Ascending aorta (tissue), 2 donors: ENCODE measurements at regions of chr10 and their contacts with region 1.

Region 1: DNA sequence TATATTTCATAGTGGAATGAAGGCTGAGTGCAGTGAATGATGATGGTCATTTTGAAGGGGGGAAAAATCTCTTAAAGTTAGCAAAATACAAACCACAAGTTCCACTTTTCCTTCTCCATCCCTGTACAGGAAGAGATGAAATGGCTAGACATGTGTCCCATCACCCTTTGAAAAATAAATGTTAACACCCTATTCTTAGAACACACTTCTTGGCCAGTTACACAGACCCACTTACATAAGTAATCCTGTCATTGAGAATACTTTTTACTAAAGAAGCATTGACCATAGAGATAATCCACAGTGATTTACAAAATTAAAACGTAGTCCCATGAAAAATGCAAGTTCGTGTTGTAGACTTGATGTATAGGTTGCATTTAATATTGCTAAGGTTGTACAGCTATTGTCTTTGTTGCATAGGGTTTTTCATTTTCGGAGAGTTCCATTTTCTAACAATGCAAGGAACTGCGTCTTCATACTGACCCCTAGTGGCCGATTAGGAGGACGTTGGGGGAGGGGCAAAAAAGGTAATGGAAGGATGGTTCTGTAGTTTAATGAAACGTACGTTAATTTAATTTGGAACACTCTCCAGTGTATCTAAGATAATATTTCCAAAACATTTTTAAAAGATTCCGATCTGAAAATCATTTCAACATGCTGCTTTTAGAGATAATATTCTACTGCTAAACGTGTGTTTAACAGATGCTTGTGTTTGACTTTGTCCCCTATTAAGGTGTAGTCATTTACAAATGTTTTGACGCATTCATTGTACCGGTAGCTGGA is 60.9 kb downstream of the ARMC3 start:
- DNase-seq: peak in 1 of 2 donors; percentile 79
- H3K4me3 ChIP-seq: no peak overlapping the region
- H3K27ac ChIP-seq: no peak overlapping the region
- H3K4me1 ChIP-seq: peaks cover 0 to 3% of the 10 kb centered on the region in 2 donors
- H3K27me3 ChIP-seq: no peaks in the 10 kb centered on the region
- CTCF ChIP-seq: peak; percentile 86

Region 2: GRCh38 chr10:22010973-22011408 is 977.8 kb before region 1 on chr10:
- intact Hi-C with region 1: loop called (anchors 2 kb)
- DNase-seq: no peak
- H3K4me3 ChIP-seq: no peak overlapping the region
- H3K27ac ChIP-seq: no peak overlapping the region
- H3K4me1 ChIP-seq: no peaks in the 10 kb centered on the region
- H3K27me3 ChIP-seq: no peaks in the 10 kb centered on the region
- CTCF ChIP-seq: peak in 1 of 3 experiments; percentile 36

Region 3: GRCh38 chr10:22251751-22252223 is 737.0 kb before region 1 on chr10:
- intact Hi-C with region 1: loop called (anchors 5 kb)
- DNase-seq: peak in 1 of 2 donors; percentile 81
- H3K4me3 ChIP-seq: peak overlapping the region; percentile 81 to 93
- H3K27ac ChIP-seq: peak overlapping the region; percentile 98
- H3K4me1 ChIP-seq: no peaks in the 10 kb centered on the region
- H3K27me3 ChIP-seq: no peaks in the 10 kb centered on the region
- CTCF ChIP-seq: no peak

Region 4: GRCh38 chr10:22436884-22437619 is 551.7 kb before region 1 on chr10:
- intact Hi-C with region 1: loop called (anchors 5 kb)
- DNase-seq: peak; percentile 43 to 94
- H3K4me3 ChIP-seq: peak overlapping the region; percentile 72 to 78
- H3K27ac ChIP-seq: peak overlapping the region; percentile 92 to 97
- H3K4me1 ChIP-seq: peaks cover 0 to 15% of the 10 kb centered on the region in 2 donors
- H3K27me3 ChIP-seq: no peaks in the 10 kb centered on the region
- CTCF ChIP-seq: peak in 1 of 3 experiments; percentile 19

Region 5: DNA sequence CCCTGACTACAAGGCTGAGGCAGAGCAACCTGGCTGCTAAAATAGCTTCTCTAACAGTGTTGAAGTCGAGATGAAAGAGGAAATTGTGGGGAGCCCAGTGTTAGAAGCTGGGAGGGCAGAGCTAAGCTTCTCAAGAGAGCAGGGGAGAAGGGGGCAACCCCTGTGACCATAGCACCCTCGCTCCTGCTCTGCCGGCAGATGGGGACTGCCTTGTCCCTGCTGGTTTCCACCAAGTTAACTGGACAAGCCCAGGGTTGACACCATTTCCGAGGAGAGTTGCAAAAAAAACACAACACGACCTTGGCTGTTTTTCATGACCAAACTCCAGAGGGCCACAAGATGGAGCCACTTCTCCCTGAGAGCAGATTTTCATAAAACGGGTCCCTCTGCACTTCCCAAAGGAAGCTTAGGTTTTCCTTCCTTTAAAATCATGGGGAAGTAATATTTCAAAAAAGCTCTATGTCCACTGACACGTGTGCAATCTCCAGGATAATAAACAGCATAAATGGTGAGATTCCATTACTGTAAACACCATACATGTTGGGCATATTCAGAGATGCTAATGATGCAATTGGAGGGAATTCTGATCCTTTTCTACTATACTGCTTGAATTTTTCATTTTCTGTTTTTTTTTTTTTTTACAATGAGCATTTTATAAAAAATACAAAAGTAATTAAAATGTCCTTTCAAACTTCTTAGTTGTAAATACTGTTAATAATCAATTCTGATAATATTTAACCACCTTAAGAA is 414.8 kb before region 1 on chr10:
- intact Hi-C with region 1: loop called (anchors 5 kb)
- DNase-seq: no peak
- H3K4me3 ChIP-seq: no peak overlapping the region
- H3K27ac ChIP-seq: no peak overlapping the region
- H3K4me1 ChIP-seq: no peaks in the 10 kb centered on the region
- H3K27me3 ChIP-seq: no peaks in the 10 kb centered on the region
- CTCF ChIP-seq: peak in 2 of 3 experiments; percentile 10 to 42